PC-3 (cell line): ENCODE measurements at regions of chr5 and their contacts with region 1.

Region 1: DNA sequence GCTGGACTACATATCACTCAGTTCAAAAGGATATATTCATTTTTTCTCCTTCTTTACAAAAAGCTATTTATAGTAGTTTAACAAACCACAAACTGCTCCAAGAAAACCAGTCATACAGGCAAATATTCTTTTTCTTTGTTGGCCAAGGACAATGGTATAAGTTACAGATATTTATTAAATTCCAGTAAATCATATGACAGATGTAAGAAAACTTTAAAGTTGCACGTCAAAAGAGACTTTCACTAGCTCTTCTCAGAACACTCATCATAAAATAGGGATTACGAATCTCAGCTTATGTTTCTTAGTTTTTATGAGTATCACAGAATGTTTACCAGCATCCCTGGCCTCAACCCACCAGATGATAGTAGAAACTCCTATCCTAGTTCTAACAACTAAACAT is 67.2 kb downstream of the ANKRD31 start:
- DNase-seq: no peak
- ATAC-seq: no peak
- H3K4me3 ChIP-seq: no peak overlapping the region
- H3K27ac ChIP-seq: no peak overlapping the region
- H3K4me1 ChIP-seq: no peaks in the 10 kb centered on the region
- H3K27me3 ChIP-seq: no peaks in the 10 kb centered on the region
- CTCF ChIP-seq: no peak

Region 2: GRCh38 chr5:75108931-75109596 is 60.5 kb before region 1 on chr5:
- CTCF ChIA-PET with region 1: no interaction called
- POLR2A ChIA-PET with region 1: interaction called, 11 read pairs
- intact Hi-C with region 1: no loop called
- DNase-seq: no peak
- ATAC-seq: no peak
- H3K4me3 ChIP-seq: no peak overlapping the region
- H3K27ac ChIP-seq: no peak overlapping the region
- H3K4me1 ChIP-seq: no peaks in the 10 kb centered on the region
- H3K27me3 ChIP-seq: no peaks in the 10 kb centered on the region
- CTCF ChIP-seq: no peak